ENCODE measurements at regions of chr1 and their contacts with region 1.

Region 1: GRCh38 chr1:2194898-2195673 is 514 bp upstream of the FAAP20 start:
- DNase-seq: peak; percentile 26
- H3K4me3 ChIP-seq: peak overlapping the region; percentile 61
- H3K27me3 ChIP-seq: no peaks in the 10 kb centered on the region
- CTCF ChIP-seq: peak; percentile 90

Region 2: DNA sequence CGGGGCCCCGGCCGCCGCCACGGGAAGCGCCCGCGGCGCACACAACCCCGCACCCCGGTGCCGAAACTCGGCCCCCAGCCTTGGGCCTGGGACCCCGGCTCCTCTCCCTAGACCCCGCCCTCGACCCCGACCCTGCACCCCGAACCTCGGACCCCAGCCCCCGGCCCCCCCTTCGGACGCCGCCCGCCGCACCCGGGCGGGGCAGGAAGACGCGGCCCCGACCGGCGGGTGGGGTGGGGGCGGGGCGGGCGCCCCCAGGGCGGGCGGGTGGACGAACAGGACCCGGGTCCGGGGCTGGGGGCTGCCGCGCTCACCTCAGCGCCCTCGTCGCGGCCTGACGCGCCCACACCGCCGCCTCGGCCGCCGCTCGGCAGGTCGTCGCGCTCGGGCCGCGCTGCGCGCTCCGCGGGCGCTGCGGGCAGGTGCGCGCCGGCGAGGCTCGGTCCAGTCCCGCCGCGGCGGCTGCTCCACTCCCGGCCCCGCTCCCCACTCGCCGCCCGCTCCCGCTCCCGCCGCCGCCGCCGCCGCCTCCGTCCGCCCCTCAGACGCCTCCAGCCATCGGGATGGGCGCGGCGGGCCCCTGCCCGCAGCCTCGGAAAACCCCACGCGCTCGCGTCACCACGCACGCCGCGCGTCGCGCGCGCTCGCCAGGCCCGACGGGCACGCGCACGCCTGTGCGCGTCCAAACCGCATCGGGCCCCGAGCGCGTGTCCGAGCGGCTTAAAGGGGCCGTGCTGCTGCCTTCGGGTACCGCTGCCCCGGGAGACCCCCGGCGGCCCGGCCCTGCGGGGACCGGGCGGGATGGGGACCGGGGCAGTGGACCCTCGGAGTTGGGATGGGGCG is 304.4 kb before region 1 on chr1 and contains the start of gene GNB1:
- CTCF ChIA-PET with region 1: no interaction called
- POLR2A ChIA-PET with region 1: no interaction called
- DNase-seq: no peak
- H3K4me3 ChIP-seq: peak within 1 kb of the TSS; percentile 89
- H3K27me3 ChIP-seq: no peaks in the 10 kb centered on the region
- CTCF ChIP-seq: no peak
- polyA plus RNA-seq, gene GNB1: 487 and 566 TPM in 2 replicates

Region 3: GRCh38 chr1:2205191-2205952 is 10.3 kb after region 1 on chr1:
- CTCF ChIA-PET with region 1: interaction called, 25 read pairs
- POLR2A ChIA-PET with region 1: interaction called, 4 read pairs
- DNase-seq: no peak
- H3K4me3 ChIP-seq: peak overlapping the region; percentile 49
- H3K27me3 ChIP-seq: no peaks in the 10 kb centered on the region
- CTCF ChIP-seq: no peak

Region 4: GRCh38 chr1:2229037-2229864 is 34.2 kb after region 1 on chr1:
- CTCF ChIA-PET with region 1: interaction called, 27 read pairs
- POLR2A ChIA-PET with region 1: no interaction called
- DNase-seq: no peak
- H3K4me3 ChIP-seq: peak overlapping the region; percentile 80
- H3K27me3 ChIP-seq: no peaks in the 10 kb centered on the region
- CTCF ChIP-seq: no peak

Region 5: DNA sequence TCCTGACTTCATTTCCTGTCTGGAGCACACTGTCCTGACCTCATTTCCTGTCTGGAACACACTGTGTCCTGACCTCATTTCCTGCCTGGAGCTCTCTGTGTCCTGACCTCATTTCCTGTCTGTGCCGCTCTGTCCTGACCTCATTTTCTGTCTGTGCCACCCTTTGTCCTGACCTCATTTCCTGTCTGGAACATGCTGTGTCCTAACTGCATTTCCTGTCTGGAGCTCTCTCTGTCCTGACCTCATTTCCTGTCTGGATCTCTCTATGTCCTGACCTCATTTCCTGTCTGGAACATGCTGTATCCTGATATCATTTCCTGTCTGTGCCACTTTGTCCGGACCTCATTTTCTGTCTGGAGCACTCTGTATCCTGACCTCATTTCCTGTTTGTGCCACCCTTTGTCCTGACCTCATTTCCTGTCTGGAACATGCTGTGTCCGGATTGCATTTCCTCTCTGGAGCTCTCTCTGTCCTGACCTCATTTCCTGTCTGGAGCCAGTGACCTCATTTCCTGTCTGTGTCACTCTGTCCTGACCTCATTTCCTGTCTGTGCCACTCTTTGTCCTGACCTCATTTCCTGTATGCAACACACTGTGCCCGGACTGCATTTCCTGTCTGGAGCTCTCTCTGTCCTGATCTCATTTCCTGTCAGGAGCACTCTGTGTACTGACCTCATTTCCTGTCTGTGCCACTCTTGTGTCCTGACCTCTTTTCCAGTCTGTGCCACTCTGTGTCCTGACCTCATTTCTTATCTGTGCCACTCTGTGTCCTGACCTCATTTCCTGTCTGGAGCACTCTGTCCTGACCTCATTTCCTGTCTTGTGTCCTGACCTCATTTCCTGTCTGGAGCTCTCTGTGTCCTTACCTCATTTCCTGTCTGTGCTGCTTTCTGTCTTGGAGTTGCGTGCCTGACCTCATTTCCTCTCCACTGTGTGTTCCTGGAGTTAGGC is 60.6 kb after region 1 on chr1:
- CTCF ChIA-PET with region 1: no interaction called
- POLR2A ChIA-PET with region 1: no interaction called
- DNase-seq: no peak
- H3K4me3 ChIP-seq: no peak overlapping the region
- H3K27me3 ChIP-seq: no peaks in the 10 kb centered on the region
- CTCF ChIP-seq: no peak

Region 6: GRCh38 chr1:2270260-2271100 is 75.4 kb after region 1 on chr1:
- CTCF ChIA-PET with region 1: no interaction called
- POLR2A ChIA-PET with region 1: interaction called, 20 read pairs
- DNase-seq: no peak
- H3K4me3 ChIP-seq: no peak overlapping the region; the same call in 1 of the 2 replicates
- H3K27me3 ChIP-seq: no peaks in the 10 kb centered on the region
- CTCF ChIP-seq: no peak

Region 7: DNA sequence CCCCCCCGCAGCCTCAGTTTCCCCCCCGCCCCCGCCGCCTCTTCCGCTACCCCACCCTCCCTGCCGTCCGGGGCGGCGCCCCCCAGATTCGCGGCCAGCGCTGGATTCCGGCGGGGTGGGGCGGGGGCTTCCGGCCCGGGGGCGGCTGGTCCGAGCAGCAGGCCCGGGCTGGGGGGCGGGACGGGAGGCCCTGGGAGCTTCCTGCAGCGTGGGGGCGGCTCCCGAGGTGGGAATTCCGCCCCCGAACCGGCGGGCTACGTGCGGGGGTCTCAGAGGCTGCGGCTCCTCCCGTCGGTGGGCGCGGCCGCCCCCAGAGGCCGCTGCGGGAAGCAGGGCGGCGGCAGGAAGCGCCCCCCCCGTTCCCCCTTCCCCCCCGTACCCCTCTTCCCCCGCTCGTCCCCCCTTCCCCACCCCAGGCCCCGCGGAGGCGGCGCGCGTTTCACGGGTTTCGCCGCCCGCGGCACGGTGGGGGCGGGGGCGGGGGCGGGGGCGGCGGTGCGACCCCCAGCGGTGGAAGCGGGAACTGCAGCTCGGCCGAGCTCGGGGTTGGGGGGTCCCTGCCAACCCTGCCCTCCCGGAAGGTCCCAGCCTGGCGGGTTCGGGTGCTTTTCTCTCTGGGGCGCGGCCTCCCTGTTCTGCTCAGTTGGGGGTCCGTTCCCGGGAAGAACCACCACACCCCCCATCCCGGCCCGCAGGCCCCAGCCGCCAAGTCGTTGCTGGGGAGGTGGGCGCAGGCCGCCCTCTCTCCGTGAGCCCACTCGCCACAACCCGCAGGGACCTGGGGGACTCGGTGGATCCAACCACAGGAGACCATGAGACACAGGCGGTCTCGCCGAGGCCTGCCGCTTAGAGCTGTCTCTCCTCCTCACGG is 120.0 kb after region 1 on chr1:
- CTCF ChIA-PET with region 1: interaction called, 14 read pairs
- POLR2A ChIA-PET with region 1: no interaction called
- DNase-seq: no peak
- H3K4me3 ChIP-seq: peak overlapping the region; percentile 47
- H3K27me3 ChIP-seq: no peaks in the 10 kb centered on the region
- CTCF ChIP-seq: peak; percentile 66

Region 8: DNA sequence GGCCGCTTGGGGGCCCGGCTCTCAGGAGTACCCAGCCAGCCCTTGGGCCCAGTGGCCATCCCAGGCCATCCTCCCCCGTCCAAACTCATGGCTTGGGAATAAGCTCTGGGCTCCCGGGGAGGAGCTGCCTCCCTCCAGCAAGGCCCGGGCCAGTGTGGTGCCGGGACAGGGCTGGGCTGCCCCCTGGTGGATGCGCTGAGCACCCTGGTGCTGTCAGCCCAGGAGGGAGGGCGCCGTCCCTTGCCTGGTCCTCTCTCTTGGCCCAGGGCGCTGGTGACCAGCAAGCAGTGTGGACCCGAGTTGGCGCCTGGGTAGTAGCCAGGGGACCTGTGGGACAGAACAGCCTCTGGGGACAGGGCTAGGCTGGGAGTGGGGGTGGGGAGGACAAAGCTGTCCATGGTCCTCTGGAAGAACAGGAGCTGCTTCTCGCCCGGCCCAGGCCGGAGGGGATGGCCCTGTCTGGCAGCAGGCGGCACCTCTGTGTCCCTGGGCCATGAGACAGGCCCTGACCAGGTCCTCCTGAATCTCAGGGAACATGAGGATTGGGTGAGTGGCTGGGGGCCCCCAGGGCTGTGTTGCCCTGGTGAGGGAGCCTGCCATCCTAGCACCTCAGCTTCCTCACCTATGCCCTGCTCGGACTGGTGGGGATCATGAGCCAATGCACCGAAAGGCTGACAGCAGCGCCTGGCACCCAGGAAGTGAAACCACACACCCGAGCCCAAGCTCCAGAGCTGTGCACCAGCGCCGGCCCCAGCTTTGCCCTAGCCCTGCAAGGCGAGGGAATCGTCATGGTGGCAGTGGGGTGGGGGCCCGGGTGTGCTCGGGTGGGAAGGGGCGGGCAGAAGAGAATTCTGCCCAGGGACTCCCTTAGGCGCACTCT is 186.9 kb after region 1 on chr1:
- CTCF ChIA-PET with region 1: interaction called, 328 read pairs
- POLR2A ChIA-PET with region 1: interaction called, 26 read pairs
- DNase-seq: no peak
- H3K4me3 ChIP-seq: no peak overlapping the region
- H3K27me3 ChIP-seq: no peaks in the 10 kb centered on the region
- CTCF ChIP-seq: peak; percentile 93

Region 9: DNA sequence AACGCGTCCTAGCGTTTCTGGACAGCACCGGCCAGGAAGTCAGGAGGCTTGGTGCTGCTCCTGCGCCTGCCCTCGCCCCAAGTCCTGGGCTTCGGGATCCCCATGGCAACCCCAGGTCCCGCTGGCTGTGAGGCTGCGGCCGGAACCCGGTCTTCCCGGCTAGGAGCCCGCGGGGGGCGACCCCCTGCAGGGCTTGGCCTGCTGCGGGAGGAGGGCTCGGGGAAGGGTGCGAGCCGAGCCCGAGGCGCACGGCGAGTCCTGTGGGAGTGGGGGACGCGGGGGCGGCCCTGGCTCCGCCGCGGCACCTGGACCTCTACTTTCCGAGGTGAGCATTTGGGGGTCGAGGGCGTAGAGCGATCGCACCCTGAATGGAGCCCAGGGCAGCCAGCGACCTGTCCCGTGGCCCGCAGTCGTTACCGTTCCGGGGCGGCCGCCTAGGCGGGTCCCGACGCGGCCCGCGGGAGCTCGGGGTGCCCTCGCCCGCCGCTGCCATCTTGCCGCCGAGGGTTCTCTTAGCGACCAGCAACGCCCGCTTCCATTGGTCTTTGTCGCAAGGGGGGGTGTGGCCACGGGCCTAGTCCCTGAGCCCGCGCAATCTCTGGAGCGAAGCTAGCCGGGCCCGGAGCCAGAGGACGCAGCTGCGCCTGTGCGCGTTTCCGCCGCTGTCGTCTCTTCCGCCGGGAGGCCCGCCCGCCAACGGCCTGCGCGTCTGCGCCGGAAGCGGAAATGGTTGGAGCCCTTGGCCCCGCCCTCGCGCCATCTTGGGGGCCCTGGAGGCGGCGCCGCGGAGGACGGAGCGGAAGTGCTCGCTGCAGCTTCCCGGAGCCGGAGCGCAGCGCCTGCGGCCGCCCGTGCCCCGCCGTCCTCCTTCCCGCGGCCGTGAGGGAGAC is 196.2 kb after region 1 on chr1 and contains the starts of genes MORN1 and RER1:
- CTCF ChIA-PET with region 1: interaction called, 31 read pairs
- POLR2A ChIA-PET with region 1: interaction called, 3 read pairs
- DNase-seq: peak; percentile 90
- H3K4me3 ChIP-seq: peak within 1 kb of the TSS; percentile 85
- H3K27me3 ChIP-seq: no peaks in the 10 kb centered on the region
- CTCF ChIP-seq: no peak
- polyA plus RNA-seq, gene MORN1: 3.7 and 4.3 TPM in 2 replicates
- polyA plus RNA-seq, gene RER1: 255 and 354 TPM in 2 replicates